Dendritic cell treated with granulocyte-macrophage colony-stimulating factor and Interleukin-4, amounts not matched to agents 40 ng/mL and 50 ng/mL, for 4 days (primary cell): ENCODE measurements at regions of chr7 and their contacts with region 1.

Region 1: DNA sequence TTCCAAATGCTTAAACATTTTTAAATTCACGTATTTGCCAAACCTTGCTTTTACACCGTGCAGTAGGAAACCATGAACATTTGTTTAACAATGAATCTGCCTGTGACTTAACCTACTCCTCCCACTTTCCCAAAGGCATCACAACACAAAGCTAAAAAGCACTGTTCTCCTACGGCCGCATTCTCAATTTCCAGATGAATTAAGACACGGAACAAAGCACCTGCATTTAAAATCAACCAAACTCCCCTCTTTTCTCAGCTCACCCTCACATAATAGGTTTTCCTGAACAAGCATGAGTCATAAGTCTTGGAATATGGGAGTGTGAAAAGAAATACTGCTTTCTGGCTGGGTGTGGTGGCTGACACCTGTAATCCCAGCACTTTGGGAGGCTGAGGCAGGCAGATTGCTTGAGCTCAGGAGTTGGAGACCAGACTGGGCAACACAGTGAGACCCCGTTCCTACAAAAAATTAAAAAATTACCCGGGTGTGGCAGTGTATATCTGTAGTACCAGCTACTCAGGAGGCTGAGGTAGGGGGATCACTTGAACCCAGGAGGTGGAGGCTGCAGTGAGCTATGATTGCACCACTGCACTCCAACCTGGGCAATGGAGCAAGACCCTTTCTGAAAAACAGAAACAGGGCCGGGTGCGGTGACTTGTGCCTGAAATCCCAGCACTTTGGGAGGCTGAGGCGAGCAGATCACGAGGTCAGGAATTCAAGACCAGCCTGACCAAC is 51.7 kb upstream of the CYTH3 start:
- H3K4me3 Mint-ChIP-seq: no peak overlapping the region
- H3K27ac Mint-ChIP-seq: no peak overlapping the region
- H3K4me1 Mint-ChIP-seq: peaks cover 5% of the 10 kb centered on the region
- H3K27me3 Mint-ChIP-seq: no peaks in the 10 kb centered on the region

Region 2: GRCh38 chr7:5709347-5709950 is 614.7 kb before region 1 on chr7:
- intact Hi-C with region 1: no loop called
- H3K4me3 Mint-ChIP-seq: no peak overlapping the region
- H3K27ac Mint-ChIP-seq: no peak overlapping the region
- H3K4me1 Mint-ChIP-seq: peaks cover 10% of the 10 kb centered on the region
- H3K27me3 Mint-ChIP-seq: no peaks in the 10 kb centered on the region

Region 3: GRCh38 chr7:5997222-5997808 is 326.8 kb before region 1 on chr7:
- intact Hi-C with region 1: loop called (anchors 10 kb)
- H3K4me3 Mint-ChIP-seq: no peak overlapping the region
- H3K27ac Mint-ChIP-seq: no peak overlapping the region
- H3K4me1 Mint-ChIP-seq: no peaks in the 10 kb centered on the region
- H3K27me3 Mint-ChIP-seq: no peaks in the 10 kb centered on the region

Region 4: GRCh38 chr7:6160191-6160623 is 163.9 kb before region 1 on chr7:
- intact Hi-C with region 1: loop called (anchors 1 kb)
- H3K4me3 Mint-ChIP-seq: no peak overlapping the region
- H3K27ac Mint-ChIP-seq: no peak overlapping the region
- H3K4me1 Mint-ChIP-seq: no peaks in the 10 kb centered on the region
- H3K27me3 Mint-ChIP-seq: no peaks in the 10 kb centered on the region

Region 5: GRCh38 chr7:6186593-6186992 is 137.5 kb before region 1 on chr7:
- intact Hi-C with region 1: no loop called
- H3K4me3 Mint-ChIP-seq: no peak overlapping the region
- H3K27ac Mint-ChIP-seq: no peak overlapping the region
- H3K4me1 Mint-ChIP-seq: peaks cover 1% of the 10 kb centered on the region
- H3K27me3 Mint-ChIP-seq: no peaks in the 10 kb centered on the region

Region 6: DNA sequence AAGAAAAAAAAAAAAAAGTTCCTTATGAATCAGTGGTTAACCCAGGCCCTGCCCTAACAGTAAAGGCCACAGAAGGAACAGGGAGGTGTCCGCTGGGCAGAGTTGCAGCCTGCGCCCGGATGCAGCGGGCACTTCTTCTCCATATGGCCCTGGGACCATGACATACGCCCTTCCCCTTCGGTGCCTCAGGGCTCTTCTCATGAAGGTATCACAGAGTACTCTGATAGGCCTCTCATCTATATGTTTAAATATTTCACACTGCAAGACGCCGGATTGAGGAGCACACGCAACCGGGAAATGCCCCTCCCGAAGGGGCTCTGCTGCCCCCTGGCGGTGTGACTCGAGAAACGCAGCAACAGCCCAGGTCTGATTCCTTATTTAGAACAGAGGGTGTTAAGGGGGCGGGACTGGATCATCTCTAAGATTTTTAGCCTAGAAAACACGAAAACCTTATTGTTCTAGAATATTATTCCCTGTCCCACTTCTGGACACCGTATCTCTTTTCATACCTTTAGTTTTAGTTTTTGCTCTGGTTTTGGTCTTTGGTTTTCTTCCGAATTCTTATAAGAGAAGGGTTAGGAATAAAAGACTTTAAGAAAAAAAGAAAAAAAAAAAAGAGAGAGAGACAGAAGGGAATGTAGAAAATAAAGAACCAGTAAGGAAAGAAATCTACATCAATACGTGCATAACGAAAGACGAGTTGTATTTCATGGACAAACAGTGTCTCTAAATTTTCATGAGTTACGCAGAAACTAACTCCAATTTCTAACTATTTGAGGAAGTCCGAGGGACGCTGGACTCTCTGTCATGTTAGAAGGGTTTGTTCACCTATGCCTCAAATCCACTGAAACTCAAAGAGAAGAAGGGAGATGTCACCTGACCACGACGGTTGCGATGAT is 111.6 kb after region 1 on chr7:
- intact Hi-C with region 1: no loop called
- H3K4me3 Mint-ChIP-seq: peak overlapping the region; percentile 76
- H3K27ac Mint-ChIP-seq: peak overlapping the region; percentile 95
- H3K4me1 Mint-ChIP-seq: peaks cover 76% of the 10 kb centered on the region
- H3K27me3 Mint-ChIP-seq: no peaks in the 10 kb centered on the region